ENCODE measurements at regions of chr16 and their contacts with region 1.

Region 1: DNA sequence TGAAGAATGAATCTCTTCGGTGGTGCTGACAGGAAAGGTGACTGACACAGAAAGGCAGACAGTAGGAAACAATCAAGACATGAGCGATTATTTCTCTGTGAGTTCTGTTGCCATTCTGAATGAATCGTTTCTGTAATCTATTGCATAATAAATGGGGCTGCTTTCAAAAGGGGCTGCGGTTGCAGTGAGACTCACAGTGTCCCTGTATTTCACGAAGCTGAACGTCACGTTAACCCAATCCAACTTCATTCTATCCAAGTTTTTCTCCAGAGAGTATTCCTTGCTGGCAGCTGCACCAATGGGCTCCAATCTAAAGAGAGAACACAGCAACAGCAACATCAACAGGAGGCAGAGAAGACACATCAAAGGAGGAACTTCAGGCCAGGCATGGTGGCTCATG is 75.4 kb downstream of the DNAH3 start:
- DNase-seq: no peak
- ATAC-seq: peak in 1 of 8 donors; percentile 67
- H3K4me3 ChIP-seq: no peak overlapping the region
- H3K27ac ChIP-seq: no peak overlapping the region
- H3K4me1 ChIP-seq: peaks cover 0 to 14% (median 0%) of the 10 kb centered on the region in 9 donors
- H3K27me3 ChIP-seq: no peaks in the 10 kb centered on the region
- CTCF ChIP-seq: no peak

Region 2: DNA sequence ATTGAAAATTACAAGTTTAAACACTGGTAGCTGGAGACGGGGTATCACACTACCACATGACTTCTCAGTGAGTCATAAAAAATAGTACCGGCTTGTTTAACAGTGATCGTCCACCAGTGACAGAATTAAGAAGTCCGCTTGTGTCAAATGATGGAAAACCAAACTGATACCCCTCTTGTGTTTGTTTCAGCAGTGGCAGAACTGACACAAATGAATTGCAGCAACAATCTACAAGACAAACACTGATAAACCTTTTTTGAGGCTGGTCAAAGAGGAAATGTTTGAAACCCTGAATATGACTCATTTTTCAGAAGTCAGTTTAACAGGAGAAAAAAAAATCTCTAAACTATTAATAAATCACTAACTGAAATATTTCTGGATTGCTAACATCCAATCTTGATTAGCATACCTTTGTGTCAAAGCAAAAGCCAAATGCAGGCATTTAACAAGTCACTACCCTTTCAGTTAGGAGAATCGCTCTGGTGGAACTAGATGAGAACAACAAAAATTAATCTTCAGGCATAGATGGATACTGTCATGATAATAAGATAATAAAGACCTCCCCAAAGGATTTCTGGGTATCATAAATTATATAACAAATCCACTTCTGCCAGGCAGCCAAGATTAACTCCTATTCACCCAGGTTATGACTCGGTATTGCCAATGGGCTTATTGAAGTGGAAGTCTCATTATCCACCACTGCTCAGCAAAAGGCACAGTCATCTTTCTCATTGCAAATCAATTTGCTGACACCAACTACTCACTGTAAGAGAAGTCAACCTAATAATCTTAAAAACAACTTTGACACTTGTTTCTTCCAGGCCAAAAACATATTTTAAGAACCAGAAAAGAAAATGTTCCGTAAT is 195.8 kb before region 1 on chr16:
- intact Hi-C with region 1: no loop called
- DNase-seq: no peak
- ATAC-seq: peak in 5 of 8 donors; percentile 48 to 63 (median 57)
- H3K4me3 ChIP-seq: peak overlapping the region in 1 of 10 donors; percentile 0
- H3K27ac ChIP-seq: peak overlapping the region in 9 of 10 donors; percentile 23 to 78 (median 59)
- H3K4me1 ChIP-seq: peaks cover 5 to 85% (median 58%) of the 10 kb centered on the region in 9 donors
- H3K27me3 ChIP-seq: no peaks in the 10 kb centered on the region
- CTCF ChIP-seq: no peak

Region 3: DNA sequence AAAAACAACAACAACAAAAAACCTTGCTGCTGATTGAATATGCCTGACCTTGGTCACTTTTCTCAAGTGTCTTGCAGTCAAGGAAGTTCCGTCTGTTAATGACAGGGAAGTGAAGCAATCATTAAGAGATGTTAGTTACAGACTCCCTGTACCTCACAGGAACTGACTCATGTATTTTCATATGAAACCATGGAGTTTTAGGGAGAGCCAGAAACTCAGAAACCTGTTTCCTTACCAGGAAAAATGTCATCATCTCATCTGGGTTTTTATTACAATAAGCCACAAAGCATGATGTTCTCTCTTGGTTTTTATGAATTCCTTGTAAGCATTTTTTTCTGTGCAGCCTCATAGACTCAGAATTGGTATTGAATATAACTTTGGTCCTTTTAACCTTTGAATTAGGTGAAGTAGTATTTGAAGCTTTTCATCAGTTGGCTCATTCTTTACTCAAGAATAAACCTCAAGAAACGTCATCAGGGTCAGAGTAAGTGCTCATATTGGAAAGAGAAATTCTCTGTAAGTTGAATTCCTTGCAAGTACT is 164.4 kb before region 1 on chr16:
- intact Hi-C with region 1: loop called in 1 of 10 experiments (anchors 10 kb)
- DNase-seq: no peak
- ATAC-seq: peak; percentile 37 to 83 (median 68)
- H3K4me3 ChIP-seq: no peak overlapping the region
- H3K27ac ChIP-seq: peak overlapping the region; percentile 20 to 88 (median 67)
- H3K4me1 ChIP-seq: peaks cover 12 to 92% (median 36%) of the 10 kb centered on the region in 9 donors
- H3K27me3 ChIP-seq: no peaks in the 10 kb centered on the region
- CTCF ChIP-seq: no peak

Region 4: DNA sequence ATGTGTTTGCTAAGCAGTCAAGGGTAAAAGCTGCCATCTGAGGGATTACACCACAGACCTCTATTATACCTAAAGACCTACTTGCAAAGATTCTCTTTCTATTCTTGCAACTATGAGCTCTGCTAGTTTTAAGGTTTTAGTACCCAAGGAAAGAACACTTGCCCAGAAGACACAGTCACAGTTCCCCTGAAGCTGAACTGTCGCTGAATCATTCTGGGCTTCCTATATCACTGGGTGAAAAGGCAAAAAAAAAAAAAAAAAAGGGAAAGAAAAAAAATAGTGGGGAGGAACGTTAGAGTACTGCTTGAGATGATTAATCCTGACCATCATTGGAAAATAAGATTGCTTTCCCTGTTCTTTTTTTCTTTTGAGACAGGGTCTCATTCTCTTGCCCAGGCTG is 136.8 kb before region 1 on chr16:
- intact Hi-C with region 1: loop called in 2 of 10 experiments (anchors 10 kb)
- DNase-seq: no peak
- ATAC-seq: no peak
- H3K4me3 ChIP-seq: no peak overlapping the region
- H3K27ac ChIP-seq: no peak overlapping the region
- H3K4me1 ChIP-seq: peaks cover 0 to 6% (median 0%) of the 10 kb centered on the region in 9 donors
- H3K27me3 ChIP-seq: no peaks in the 10 kb centered on the region
- CTCF ChIP-seq: no peak

Region 5: DNA sequence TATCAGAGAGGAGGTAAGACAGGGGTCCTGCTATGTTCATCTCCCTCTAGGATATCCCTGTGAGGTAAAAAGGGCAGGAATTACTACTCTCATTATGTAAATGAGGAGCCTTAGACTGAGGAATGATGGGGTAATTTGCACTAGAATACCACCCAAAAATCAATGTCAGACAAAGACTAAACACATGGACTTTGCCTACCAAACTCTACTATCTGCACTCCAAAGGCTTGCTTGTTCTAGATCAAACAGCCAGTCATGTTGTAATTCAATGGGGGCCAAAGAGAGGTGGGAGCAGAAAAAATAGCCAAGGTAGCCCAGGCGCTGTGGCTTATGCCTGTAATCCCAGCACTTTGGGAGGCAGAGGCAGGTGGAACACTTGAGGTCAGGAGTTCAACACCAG is 53.9 kb before region 1 on chr16:
- intact Hi-C with region 1: no loop called
- DNase-seq: no peak
- ATAC-seq: no peak
- H3K4me3 ChIP-seq: no peak overlapping the region
- H3K27ac ChIP-seq: no peak overlapping the region
- H3K4me1 ChIP-seq: peaks cover 0 to 10% (median 0%) of the 10 kb centered on the region in 9 donors
- H3K27me3 ChIP-seq: no peaks in the 10 kb centered on the region
- CTCF ChIP-seq: no peak